Left colon (tissue), 2 donors: ENCODE measurements at regions of chr19 and their contacts with region 1.

Region 1: DNA sequence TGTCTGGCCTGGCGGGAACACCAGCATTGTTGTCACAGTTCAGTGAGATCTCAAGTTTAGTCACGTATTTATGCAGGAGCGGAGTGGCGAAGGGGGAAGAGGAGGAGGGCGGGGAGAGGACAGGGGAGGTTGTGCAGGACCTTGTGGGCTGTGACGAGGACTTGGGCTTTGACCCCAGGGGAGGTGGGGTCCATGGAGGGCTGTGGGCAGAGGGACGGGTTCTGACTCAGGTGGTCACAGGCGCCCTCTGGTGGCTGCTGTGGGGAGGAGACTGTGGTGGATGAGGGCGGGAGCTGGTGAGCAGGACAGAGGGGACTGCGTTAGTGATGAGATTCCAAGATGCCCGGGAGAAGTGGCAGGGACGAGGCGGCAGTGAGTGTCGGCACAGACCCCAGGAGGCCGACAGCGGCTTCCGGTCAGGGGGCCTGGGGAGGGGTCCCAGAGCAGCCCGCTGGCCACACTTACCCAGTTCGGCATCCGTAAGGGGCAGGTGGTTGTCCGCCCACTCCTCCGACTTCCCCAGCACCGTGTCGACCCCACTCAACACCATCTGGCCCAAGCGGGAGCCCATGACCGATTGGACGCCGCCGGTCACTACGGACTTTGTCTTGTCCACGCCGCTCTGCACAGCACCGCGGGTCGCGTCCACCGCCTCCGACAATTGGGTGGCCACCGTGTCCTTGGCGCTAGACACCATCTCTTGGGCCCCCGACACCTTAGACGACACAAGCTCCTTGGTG is 15.7 kb downstream of the PLIN3 start:
- DNase-seq: peak in 1 of 2 donors; percentile 75
- ATAC-seq: peak; percentile 75

Region 2: DNA sequence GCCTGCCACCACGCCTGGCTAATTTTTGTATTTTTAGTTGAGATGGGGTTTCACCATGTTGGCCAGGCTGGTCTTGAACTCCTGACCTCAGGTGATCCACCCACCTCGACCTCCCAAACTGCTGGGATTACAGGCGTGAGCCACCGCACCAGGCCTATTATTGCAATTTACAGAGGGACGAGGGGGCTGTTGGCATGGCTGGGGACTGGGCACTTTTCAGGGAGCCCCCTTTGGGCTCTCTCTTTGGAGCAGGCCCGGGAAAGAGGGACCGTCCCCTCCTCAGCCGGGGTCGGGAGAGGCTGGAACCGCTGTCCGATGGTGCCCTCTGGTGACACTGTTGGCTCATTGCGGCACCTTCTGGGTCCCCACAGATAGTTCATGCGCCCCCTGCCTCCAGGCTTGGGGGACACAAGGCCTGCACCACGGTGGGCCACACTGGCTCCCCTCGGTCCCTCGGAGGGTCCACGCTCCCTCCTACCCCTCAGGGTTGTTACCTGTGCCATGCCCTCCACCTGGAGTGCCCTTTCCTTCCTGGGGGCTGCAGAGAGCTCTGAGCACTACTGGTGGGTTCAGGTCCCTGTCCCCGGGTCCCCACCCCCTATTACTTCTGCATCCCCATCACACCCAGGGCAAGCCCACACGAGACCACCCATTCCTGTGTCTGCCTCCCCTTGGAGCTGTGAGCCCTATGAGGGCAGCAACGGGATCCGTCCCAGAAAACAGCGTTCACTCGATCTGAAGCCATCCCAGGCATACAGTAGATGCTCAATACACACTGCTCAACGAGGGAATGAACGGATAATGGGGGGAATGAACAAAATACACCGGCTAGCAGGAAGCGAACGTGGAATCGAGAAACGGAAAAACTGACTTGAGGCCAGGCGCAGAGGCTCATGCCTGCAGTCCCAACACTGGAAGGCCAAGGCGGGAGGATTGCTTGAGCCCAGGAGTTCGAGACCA is 47.7 kb before region 1 on chr19:
- intact Hi-C with region 1: loop called in 1 of 2 experiments (anchors 5 kb)
- DNase-seq: peak in 1 of 2 donors; percentile 66
- ATAC-seq: peak; percentile 76

Region 3: GRCh38 chr19:4811328-4812131 is 40.2 kb before region 1 on chr19:
- intact Hi-C with region 1: loop called (anchors 2 to 5 kb)
- DNase-seq: peak; percentile 73 to 89
- ATAC-seq: peak; percentile 56